Colonic mucosa (tissue), 4 donors: ENCODE measurements at regions of chr4 and their contacts with region 1.

Region 1: GRCh38 chr4:68732653-68733466 is 62.4 kb upstream of the UGT2B15 start:
- DNase-seq: peak; percentile 56
- H3K4me3 ChIP-seq: no peak overlapping the region
- H3K27ac ChIP-seq: peak overlapping the region; percentile 76
- H3K4me1 ChIP-seq: no peaks in the 10 kb centered on the region
- H3K27me3 ChIP-seq: no peaks in the 10 kb centered on the region
- CTCF ChIP-seq: no peak

Region 2: DNA sequence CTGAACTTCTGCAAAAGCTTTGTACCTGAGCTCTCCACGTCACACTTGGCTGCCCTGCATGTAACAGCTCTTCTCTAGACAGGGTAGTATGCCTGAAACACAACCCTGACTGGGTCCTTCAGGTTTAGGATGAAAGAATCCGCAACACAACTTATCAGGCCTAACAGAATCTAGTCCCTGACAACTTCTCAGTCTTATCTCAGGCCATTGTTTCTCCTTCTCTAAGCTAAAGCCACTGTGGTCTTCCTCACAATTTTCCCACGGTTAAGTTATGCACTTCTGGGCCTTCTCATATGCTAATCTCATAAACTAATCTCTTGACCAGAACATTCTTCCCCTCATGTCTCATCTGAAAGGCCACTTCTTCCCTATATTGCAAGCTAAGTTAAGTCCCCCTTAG is 476.6 kb before region 1 on chr4:
- intact Hi-C with region 1: no loop called
- DNase-seq: no peak
- H3K4me3 ChIP-seq: no peak overlapping the region
- H3K27ac ChIP-seq: no peak overlapping the region
- H3K4me1 ChIP-seq: no peaks in the 10 kb centered on the region
- H3K27me3 ChIP-seq: no peaks in the 10 kb centered on the region
- CTCF ChIP-seq: no peak

Region 3: DNA sequence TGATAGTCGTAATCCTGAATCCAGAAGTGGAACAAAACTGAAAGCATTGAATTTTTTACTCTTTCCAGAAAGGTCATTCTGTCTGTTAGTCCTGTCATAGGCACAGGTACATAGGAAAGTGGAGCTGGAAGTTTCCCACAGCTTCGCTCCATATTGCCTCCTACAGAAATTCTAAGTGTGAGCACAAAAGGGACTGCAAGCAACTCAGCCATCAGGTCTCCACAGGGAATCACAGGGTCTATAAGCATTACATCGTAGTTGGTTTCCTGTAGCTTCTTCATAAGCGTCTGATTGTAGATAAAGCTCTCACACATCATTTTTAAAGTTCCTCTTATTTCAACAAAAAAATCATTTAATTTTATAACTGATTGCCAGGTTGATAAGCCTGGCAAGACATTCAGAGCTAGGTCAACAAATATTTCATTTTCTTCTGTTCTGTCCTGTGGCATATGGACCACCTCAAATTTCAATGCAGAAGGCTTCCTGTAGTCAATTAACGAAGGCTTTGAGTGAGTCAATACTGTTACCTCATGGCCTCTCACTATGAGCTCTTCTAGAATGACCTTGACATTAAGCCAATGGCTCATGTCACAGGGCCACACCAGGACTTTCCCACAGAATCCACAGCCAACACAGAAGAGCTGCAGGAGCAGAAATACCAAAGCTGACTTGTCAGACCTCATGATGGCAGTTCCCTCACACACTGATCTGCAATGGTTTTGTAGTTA is 218.4 kb after region 1 on chr4 and contains the start of gene UGT2A3:
- intact Hi-C with region 1: loop called (anchors 10 kb)
- DNase-seq: peak; percentile 55
- H3K4me3 ChIP-seq: peak within 1 kb of the TSS; percentile 26
- H3K27ac ChIP-seq: peak within 1 kb of the TSS; percentile 70
- H3K4me1 ChIP-seq: peaks cover 5% of the 10 kb centered on the region
- H3K27me3 ChIP-seq: no peaks in the 10 kb centered on the region
- CTCF ChIP-seq: no peak
- total RNA-seq, gene UGT2A3: 36.5 to 135 TPM